ENCODE measurements at regions of chr12 and their contacts with region 1.

Region 1: DNA sequence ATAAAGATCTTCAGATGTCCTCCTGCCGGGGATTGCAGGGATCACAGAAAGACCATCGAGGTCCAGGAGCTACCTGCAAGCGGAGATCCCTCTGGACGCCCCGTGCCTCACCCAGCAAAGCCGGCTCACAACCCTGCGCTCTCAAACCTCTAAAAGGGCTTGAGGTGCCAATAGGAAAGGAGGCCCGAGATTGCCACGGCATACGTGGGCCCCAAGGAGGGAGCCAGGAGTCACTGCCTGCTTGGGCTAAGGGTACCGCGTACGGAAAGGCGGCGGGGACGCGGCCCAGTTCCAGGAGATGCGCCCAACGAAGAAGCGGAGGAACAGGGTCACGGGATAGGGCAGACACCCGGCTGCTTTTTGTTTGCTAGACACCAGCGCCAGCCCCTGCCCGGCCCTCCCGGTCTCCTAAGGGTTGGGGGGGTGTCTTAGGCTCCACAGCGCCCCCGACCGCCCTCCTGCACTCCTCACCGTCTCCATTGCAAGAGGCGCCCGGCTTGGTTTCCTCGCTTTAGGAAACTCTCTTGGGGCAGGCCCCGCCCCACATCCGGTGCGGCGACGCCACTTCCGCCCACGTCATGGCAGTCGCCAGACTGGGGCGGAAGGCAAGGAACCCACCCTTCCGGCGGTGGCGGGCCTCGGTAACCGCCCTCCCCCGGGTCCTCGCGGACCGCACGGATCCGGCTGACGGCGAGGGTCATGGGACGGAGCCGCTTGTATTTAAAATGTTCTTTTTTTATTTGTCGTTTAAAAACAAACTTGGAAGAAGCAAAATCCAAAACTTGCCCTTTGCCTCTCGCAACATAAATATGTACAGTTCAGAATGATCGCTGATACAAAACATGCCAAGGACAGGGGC is at the start of gene PRKAG1:
- DNase-seq: peak; percentile 98
- H3K4me3 ChIP-seq: peak within 1 kb of the TSS; percentile 79 to 93
- H3K27ac ChIP-seq: peak within 1 kb of the TSS; percentile 90 to 98
- H3K4me1 ChIP-seq: peaks cover 0 to 14% of the 10 kb centered on the region in 2 experiments; a peak in 2 of 4 replicates
- H3K27me3 ChIP-seq: no peaks in the 10 kb centered on the region
- CTCF ChIP-seq: peak; percentile 57
- EP300 ChIP-seq: peak in 1 of 2 experiments; percentile 19; a peak in 1 of 4 replicates
- RAD21 ChIP-seq: no peak
- polyA plus RNA-seq, gene PRKAG1: 75.1 and 113 TPM in 2 replicates

Region 2: GRCh38 chr12:48977315-48978281 is 40.9 kb before region 1 on chr12:
- CTCF ChIA-PET with region 1: interaction called, 13 read pairs
- POLR2A ChIA-PET with region 1: no interaction called
- DNase-seq: peak; percentile 91
- H3K4me3 ChIP-seq: peak overlapping the region in 1 of 2 experiments; percentile 32; a peak in 1 of 4 replicates
- H3K27ac ChIP-seq: no peak overlapping the region
- H3K4me1 ChIP-seq: peaks cover 0 to 26% of the 10 kb centered on the region in 2 experiments; a peak in 1 of 4 replicates
- H3K27me3 ChIP-seq: peaks cover 66% of the 10 kb centered on the region
- CTCF ChIP-seq: peak; percentile 70
- EP300 ChIP-seq: no peak
- RAD21 ChIP-seq: peak; percentile 29; the same call in 1 of the 2 replicates

Region 3: GRCh38 chr12:48995061-48995879 is 23.2 kb before region 1 on chr12:
- CTCF ChIA-PET with region 1: interaction called, 136 read pairs
- POLR2A ChIA-PET with region 1: interaction called, 5 read pairs
- DNase-seq: peak; percentile 98
- H3K4me3 ChIP-seq: peak overlapping the region; percentile 1 to 41; a peak in 1 of 4 replicates
- H3K27ac ChIP-seq: no peak overlapping the region
- H3K4me1 ChIP-seq: peaks cover 9 to 17% of the 10 kb centered on the region in 2 experiments; a peak in 3 of 4 replicates
- H3K27me3 ChIP-seq: no peaks in the 10 kb centered on the region; the same call in 1 of the 2 replicates
- CTCF ChIP-seq: peak; percentile 70
- EP300 ChIP-seq: no peak
- RAD21 ChIP-seq: peak; percentile 86

Region 4: DNA sequence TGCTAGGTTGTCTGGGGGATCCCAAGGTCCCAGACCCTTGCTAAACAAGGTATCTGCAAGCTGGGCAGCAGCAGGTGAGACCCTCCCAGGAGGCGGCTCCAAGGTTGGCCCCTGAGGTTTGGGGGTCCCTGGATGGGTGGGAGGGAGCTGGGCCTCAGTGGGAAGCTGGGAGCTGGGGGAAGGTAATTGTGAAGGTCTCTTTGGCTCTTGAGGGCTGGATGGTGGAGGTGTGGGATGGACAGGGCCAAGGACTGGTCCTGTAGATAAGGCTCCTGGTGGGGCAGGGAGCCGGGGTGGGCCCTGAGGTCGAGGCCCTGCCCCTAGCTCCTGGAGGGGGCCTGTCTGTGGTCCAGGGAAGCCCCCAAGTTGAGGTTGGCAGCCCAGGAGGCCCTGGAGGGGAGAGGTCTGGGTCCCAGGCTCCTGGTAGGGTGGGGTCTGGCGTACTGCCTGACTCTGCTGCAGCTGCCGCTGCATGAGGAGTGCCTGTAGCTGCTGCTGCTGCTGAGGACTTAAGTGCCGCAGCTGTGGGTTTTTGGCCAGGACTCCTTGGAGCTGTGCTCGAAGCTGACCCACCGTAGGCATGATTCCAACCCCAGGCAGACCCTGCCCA is 13.2 kb after region 1 on chr12:
- CTCF ChIA-PET with region 1: interaction called, 29 read pairs
- POLR2A ChIA-PET with region 1: interaction called, 5 read pairs
- DNase-seq: no peak
- H3K4me3 ChIP-seq: no peak overlapping the region
- H3K27ac ChIP-seq: no peak overlapping the region; a peak in 1 of 4 replicates
- H3K4me1 ChIP-seq: no peaks in the 10 kb centered on the region
- H3K27me3 ChIP-seq: no peaks in the 10 kb centered on the region
- CTCF ChIP-seq: no peak
- EP300 ChIP-seq: no peak
- RAD21 ChIP-seq: no peak

Region 5: DNA sequence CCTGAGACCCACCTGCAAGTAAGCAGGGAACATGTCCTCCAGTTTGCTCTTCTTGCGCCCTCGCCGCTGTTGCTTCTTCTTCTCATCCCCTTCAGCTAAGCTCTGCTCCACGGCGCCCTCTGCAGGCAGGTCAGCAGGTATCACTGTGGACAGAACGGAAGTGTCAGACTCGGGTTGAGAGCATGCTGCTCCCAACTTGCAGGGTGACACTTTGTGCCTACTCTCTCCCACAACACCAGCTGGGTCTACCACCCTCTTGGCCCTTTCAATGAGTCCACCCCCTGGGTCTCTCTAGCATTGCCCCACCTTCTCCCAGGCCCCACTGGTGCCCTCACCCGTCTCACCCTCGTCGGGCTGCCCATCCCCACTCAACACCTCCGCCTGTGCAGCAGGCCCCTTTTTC is 25.4 kb after region 1 on chr12:
- CTCF ChIA-PET with region 1: interaction called, 14 read pairs
- POLR2A ChIA-PET with region 1: no interaction called
- DNase-seq: peak; percentile 80
- H3K4me3 ChIP-seq: no peak overlapping the region
- H3K27ac ChIP-seq: no peak overlapping the region
- H3K4me1 ChIP-seq: no peaks in the 10 kb centered on the region
- H3K27me3 ChIP-seq: no peaks in the 10 kb centered on the region
- CTCF ChIP-seq: peak; percentile 67
- EP300 ChIP-seq: no peak
- RAD21 ChIP-seq: no peak

Measured in SK-N-SH (cell line).